ENCODE measurements at regions of chr12 and their contacts with region 1.

Region 1: GRCh38 chr12:51980051-51980808 is 26.5 kb upstream of the TAMALIN start:
- DNase-seq: peak; percentile 78
- ATAC-seq: peak; percentile 95
- H3K4me3 Mint-ChIP-seq: no peak overlapping the region
- H3K27ac Mint-ChIP-seq: no peak overlapping the region
- H3K4me1 Mint-ChIP-seq: peaks cover 28% of the 10 kb centered on the region
- H3K27me3 Mint-ChIP-seq: peaks cover 8% of the 10 kb centered on the region

Region 2: DNA sequence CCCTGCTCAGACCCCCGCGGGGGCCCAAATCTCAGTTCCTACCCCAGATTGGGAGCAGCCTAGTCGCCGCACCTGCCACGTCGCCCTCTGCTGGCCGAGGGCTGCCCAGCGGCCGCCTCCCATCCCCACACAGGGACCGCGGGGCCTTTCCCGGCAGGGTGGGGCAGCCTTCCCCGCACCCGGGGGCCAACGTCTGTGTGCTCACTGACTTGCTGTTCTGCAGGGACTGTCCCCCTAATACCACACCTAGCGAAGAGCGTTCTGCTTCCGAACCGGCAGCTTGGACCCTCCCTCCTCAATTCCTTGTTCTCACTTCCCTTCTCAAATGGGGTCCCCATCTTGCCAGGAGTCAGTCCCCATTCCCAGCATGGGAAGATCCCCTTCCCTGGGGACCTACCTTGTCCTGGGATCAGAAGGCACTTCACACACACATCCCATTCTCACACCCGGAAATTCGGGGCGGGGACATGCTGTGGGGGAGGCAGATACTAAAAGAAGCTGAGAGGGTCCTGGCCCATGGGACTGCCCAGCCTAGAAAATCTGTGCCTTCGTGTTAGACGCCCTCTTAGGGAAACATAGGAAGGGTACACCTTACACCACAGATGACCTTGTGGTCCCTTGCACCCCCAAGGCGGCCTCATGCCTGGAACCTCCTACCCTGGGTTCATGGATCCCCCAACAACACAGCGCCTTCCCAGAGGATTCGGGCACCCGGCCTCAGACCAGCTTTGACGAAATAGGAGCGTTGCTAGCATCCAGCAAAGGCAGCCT is 56.5 kb before region 1 on chr12:
- CTCF ChIA-PET with region 1: interaction called, 43 read pairs
- DNase-seq: peak; percentile 62
- ATAC-seq: peak; percentile 78
- H3K4me3 Mint-ChIP-seq: no peak overlapping the region
- H3K27ac Mint-ChIP-seq: no peak overlapping the region
- H3K4me1 Mint-ChIP-seq: peaks cover 4% of the 10 kb centered on the region
- H3K27me3 Mint-ChIP-seq: peaks cover 7% of the 10 kb centered on the region

Region 3: GRCh38 chr12:51934080-51934479 is 46.1 kb before region 1 on chr12:
- CTCF ChIA-PET with region 1: no interaction called
- DNase-seq: no peak
- ATAC-seq: no peak
- H3K4me3 Mint-ChIP-seq: no peak overlapping the region
- H3K27ac Mint-ChIP-seq: no peak overlapping the region
- H3K4me1 Mint-ChIP-seq: no peaks in the 10 kb centered on the region
- H3K27me3 Mint-ChIP-seq: peaks cover 22% of the 10 kb centered on the region

Region 4: GRCh38 chr12:51994959-51995358 is 14.7 kb after region 1 on chr12:
- CTCF ChIA-PET with region 1: interaction called, 23 read pairs
- DNase-seq: no peak
- ATAC-seq: no peak
- H3K4me3 Mint-ChIP-seq: no peak overlapping the region
- H3K27ac Mint-ChIP-seq: no peak overlapping the region
- H3K4me1 Mint-ChIP-seq: peaks cover 4% of the 10 kb centered on the region
- H3K27me3 Mint-ChIP-seq: no peaks in the 10 kb centered on the region

Measured in activated CD8-positive, alpha-beta memory T cell treated with anti-CD3 and anti-CD28 coated beads, Interleukin-2, amount 10 ng/mL, durations not matched to agents 7 days and 5 days (primary cell).